Naive thymus-derived CD4-positive, alpha-beta T cell (primary cell): ENCODE measurements at regions of chr3 and their contacts with region 1.

Region 1: DNA sequence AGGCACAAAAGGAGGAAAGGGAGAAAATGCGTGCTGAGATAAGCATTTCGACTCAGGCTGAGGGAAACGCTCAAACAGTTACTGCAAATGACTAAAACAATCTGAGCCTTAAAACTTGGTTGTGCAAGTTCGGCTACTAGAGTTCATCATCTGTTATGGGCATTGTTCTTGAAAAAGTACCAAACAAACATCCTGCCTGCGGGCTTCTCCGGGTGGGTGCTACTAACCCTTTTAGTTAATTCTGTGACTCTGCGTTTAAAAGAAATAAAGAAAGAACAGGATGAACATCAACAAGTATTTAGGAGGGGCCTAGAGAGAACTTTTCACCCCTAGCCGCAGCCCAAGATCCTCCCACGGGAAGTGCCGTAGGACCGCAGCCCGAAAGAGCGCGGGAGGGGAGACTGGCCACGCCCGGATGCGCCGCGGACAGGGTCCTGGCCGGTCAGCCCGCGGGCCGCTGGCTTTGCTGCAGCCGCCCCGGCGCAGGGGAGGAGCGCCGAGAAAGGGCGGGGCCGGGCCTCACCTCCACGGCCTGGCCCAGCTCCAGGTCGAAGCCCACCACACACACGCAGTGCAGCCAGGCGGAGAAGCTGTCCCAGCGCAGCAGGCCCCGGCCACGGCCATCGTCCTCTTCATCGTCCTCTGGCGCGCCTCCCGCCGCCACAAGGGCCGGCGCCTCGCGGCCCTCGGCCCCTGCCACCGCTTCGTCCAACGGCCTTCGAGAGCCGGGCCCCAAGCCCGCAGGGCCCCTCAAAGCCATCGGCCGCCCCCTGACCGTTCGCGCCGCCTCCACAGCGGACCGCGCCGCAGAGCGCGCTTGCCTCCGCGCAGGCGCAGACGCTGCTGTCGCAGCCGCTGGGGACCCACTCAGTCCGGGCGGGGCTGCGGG is at the start of gene DENND6A:
- DNase-seq: peak; percentile 88 to 96 (median 94)
- ATAC-seq: peak; percentile 89
- H3K4me3 ChIP-seq: peak within 1 kb of the TSS; percentile 81
- H3K4me3 Mint-ChIP-seq: peak within 1 kb of the TSS; percentile 82 to 98 (median 93)
- H3K27ac ChIP-seq: peak within 1 kb of the TSS; percentile 87
- H3K27ac Mint-ChIP-seq: peak within 1 kb of the TSS; percentile 88 to 96 (median 93)
- H3K4me1 ChIP-seq: peaks cover 30 to 35% of the 10 kb centered on the region in 2 donors
- H3K4me1 Mint-ChIP-seq: peaks cover 19 to 42% (median 39%) of the 10 kb centered on the region in 7 donors
- H3K27me3 ChIP-seq: no peaks in the 10 kb centered on the region
- H3K27me3 Mint-ChIP-seq: peaks cover 0 to 2% (median 0%) of the 10 kb centered on the region in 5 donors
- total RNA-seq, gene DENND6A: 31.3 to 76.6 (median 40.8) TPM

Region 2: DNA sequence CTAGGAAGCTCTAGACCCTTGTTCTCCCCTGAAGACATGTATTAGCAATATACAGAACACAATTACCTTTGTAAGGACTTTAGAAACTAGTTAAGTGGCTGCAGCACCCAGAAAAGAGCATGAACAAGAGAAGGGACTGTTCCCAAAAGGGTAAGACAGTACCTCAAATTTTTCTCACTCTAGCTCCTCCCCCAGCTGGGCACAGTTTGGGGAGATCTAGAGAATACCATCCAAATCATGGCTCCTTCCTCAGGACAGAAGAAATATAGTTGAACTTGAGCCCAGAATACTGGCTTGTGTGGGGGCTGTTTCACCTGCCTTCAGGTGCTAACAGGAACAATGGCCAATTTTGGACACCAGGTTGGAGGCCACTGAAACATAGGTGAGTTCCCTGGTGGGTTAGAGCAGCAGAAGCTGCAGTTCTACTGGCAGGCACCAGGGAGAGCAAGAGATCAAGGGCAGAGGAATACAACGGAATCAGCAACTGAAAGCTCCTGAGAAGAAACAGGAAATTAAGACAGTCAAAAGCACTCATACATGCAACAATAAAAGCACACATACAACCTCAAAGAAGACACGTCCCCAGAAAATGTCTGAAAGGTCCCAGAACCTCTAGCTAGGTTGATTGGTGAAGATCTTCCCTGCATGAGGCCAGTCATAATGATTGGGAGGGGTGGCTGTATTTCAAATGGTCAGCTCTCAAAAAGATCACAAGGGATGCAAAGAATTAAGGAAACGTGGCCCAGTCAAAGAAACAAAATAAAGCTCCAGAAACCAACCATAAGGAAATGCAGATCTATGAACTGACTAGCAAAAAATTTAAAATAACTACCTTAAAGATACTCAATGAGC is 295.1 kb before region 1 on chr3:
- CTCF ChIA-PET with region 1: interaction called, 11 read pairs
- POLR2A ChIA-PET with region 1: no interaction called
- intact Hi-C with region 1: loop called (anchors 2 kb)
- DNase-seq: peak; percentile 22 to 77 (median 69)
- ATAC-seq: peak; percentile 98
- H3K4me3 ChIP-seq: peak overlapping the region; percentile 45
- H3K4me3 Mint-ChIP-seq: peak overlapping the region; percentile 39 to 75 (median 63)
- H3K27ac ChIP-seq: no peak overlapping the region
- H3K27ac Mint-ChIP-seq: peak overlapping the region; percentile 6 to 76 (median 66)
- H3K4me1 ChIP-seq: peaks cover 0 to 7% of the 10 kb centered on the region in 2 donors
- H3K4me1 Mint-ChIP-seq: peaks cover 8 to 26% (median 20%) of the 10 kb centered on the region in 7 donors
- H3K27me3 ChIP-seq: no peaks in the 10 kb centered on the region
- H3K27me3 Mint-ChIP-seq: peaks cover 0 to 25% (median 9%) of the 10 kb centered on the region in 5 donors

Region 3: DNA sequence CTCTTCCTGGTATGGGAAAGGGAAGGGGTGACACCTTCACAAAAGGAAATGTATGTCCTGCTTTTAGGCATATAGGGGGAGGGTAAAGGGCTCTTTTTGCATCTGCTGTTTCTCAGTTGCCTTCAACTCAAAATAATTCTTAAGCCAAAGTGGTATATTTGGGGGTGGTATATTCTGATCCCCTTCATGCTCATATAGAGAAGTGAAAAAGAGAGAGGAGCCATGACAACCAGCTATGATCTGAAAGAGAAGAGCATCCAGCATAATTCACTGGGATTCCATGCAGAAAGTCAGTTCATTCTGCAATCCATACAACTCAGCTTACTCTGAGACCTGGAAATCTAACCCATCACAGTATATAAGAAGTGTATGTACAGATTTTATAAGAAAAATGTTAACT is 22.0 kb before region 1 on chr3:
- CTCF ChIA-PET with region 1: interaction called, 4 read pairs
- POLR2A ChIA-PET with region 1: interaction called, 9 read pairs
- intact Hi-C with region 1: loop called (anchors 2 kb)
- DNase-seq: no peak
- ATAC-seq: no peak
- H3K4me3 ChIP-seq: no peak overlapping the region
- H3K4me3 Mint-ChIP-seq: no peak overlapping the region
- H3K27ac ChIP-seq: no peak overlapping the region
- H3K27ac Mint-ChIP-seq: peak overlapping the region in 3 of 9 donors; percentile 51 to 90 (median 76)
- H3K4me1 ChIP-seq: peaks cover 0 to 8% of the 10 kb centered on the region in 2 donors
- H3K4me1 Mint-ChIP-seq: peaks cover 7 to 41% (median 33%) of the 10 kb centered on the region in 7 donors
- H3K27me3 ChIP-seq: no peaks in the 10 kb centered on the region
- H3K27me3 Mint-ChIP-seq: no peaks in the 10 kb centered on the region

Region 4: DNA sequence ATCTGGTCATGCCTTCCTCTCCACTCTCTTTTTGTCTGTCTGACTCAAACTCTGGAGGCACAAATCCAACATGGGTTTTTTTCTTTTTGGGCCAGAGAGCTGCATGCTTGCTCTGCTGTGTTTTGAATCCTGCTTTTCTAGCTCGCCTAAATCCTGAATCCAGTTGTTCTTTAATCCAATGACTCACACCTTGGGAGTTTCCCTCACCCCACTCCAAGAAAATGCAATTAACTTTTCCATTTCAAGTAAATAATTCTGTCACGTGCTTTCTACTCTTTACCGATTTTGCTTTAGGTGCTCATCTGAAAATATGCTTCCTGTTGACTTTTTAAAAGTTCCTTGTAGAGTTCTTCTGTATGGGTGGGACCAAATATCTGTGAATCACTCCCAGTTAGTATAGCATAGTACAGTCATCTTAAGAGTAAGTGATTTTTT is 111.2 kb after region 1 on chr3:
- CTCF ChIA-PET with region 1: no interaction called
- POLR2A ChIA-PET with region 1: interaction called, 3 read pairs
- intact Hi-C with region 1: loop called in 1 of 2 experiments (anchors 2 kb)
- DNase-seq: peak in 5 of 9 donors; percentile 13 to 35 (median 28)
- ATAC-seq: peak; percentile 71
- H3K4me3 ChIP-seq: peak overlapping the region; percentile 19
- H3K4me3 Mint-ChIP-seq: peak overlapping the region; percentile 13 to 88 (median 79)
- H3K27ac ChIP-seq: peak overlapping the region; percentile 12
- H3K27ac Mint-ChIP-seq: peak overlapping the region; percentile 34 to 94 (median 89)
- H3K4me1 ChIP-seq: peaks cover 8 to 20% of the 10 kb centered on the region in 2 donors
- H3K4me1 Mint-ChIP-seq: peaks cover 45 to 90% (median 77%) of the 10 kb centered on the region in 7 donors
- H3K27me3 ChIP-seq: no peaks in the 10 kb centered on the region
- H3K27me3 Mint-ChIP-seq: no peaks in the 10 kb centered on the region

Region 5: DNA sequence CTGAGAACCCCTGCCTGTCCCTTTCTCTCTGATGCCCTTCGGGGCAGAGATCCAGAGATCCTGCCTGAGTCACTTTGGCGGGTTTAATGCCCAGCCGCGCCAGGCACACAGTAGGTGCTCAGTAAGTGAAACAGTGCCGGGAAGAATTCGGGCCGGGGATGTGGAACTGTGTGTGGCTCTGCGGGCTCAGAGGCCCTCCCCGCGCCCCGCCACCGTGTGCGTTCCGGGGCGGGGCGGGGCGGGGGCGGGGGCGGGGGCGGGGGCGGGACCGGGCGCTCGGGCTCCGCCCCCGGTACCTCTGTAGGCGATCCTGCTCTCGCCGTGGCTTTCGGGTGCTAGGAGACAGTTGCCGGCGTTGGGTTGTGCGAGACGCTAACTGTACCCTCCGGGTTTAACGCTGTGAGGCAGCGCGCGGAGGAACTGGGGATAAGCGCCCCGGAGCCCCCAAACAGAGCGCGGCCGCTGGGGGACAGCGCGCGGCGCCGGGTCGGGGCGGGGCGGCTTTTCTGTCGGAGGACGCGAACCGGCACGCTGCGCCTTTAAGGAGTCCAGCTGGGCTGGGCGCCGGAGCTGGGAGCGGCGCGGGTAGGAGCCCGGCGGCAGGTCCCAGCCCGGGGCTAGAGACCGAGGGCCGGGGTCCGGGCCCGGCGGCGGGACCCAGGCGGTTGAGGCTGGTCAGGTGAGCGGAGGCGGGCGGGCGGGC is 544.9 kb after region 1 on chr3 and contains the start of gene ABHD6:
- CTCF ChIA-PET with region 1: no interaction called
- POLR2A ChIA-PET with region 1: no interaction called
- intact Hi-C with region 1: loop called in 1 of 2 experiments (anchors 2 kb)
- DNase-seq: peak; percentile 58 to 95 (median 86)
- ATAC-seq: peak; percentile 91
- H3K4me3 ChIP-seq: peak within 1 kb of the TSS; percentile 86
- H3K4me3 Mint-ChIP-seq: peak within 1 kb of the TSS; percentile 84 to 98 (median 92)
- H3K27ac ChIP-seq: peak within 1 kb of the TSS; percentile 72
- H3K27ac Mint-ChIP-seq: peak within 1 kb of the TSS; percentile 50 to 87 (median 81)
- H3K4me1 ChIP-seq: peaks cover 6 to 12% of the 10 kb centered on the region in 2 donors
- H3K4me1 Mint-ChIP-seq: peaks cover 9 to 18% (median 13%) of the 10 kb centered on the region in 7 donors
- H3K27me3 ChIP-seq: no peaks in the 10 kb centered on the region
- H3K27me3 Mint-ChIP-seq: peaks cover 0 to 29% (median 13%) of the 10 kb centered on the region in 5 donors
- total RNA-seq, gene ABHD6: 3.1 to 7.3 (median 6.6) TPM